ENCODE measurements at regions of chr10 and their contacts with region 1.

Region 1: DNA sequence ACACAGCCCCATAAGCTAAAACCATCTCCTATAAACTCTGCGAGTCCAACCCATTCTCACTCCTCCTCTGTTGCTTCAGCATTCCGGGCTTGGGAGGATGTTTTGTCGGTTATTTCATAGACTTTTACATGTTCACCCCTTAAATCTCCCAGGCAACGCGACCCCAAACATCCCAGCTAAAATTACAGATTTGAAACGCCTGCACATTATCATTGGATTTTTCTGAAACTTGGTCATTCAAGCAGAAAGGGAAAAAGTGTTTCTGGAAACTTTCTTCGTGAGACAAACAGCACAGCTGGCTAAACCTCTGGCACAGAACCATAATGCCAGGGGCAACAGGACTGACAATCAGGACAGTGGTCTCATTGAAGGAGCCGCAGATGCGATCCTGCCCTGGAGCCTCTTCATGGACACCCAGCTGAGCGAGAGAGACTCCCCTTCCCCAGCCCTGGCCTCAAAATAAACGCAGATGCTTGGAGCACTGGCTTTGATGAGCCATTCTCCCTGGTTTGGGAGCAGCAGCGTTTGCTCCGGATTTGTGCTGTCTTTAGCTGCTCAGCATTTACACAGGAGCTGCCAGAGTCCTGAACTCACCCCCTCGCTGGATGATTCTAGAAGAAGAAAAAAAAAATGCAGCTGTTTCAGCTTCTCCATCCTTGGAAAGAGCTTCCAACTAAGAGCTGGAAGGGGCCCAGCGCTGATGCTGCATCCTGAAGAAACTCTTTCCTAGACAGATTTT is 30.1 kb downstream of the AFAP1L2 start:
- DNase-seq: no peak
- H3K4me3 ChIP-seq: no peak overlapping the region
- H3K27ac ChIP-seq: no peak overlapping the region
- H3K4me1 ChIP-seq: peaks cover 0 to 4% (median 1%) of the 10 kb centered on the region in 4 experiments
- H3K27me3 ChIP-seq: no peaks in the 10 kb centered on the region

Region 2: GRCh38 chr10:114356751-114357514 is 17.3 kb before region 1 on chr10:
- CTCF ChIA-PET with region 1: no interaction called
- POLR2A ChIA-PET with region 1: no interaction called
- DNase-seq: no peak
- H3K4me3 ChIP-seq: no peak overlapping the region
- H3K27ac ChIP-seq: no peak overlapping the region
- H3K4me1 ChIP-seq: peaks cover 0 to 13% (median 5%) of the 10 kb centered on the region in 4 experiments
- H3K27me3 ChIP-seq: no peaks in the 10 kb centered on the region

Region 3: GRCh38 chr10:114388275-114388674 is 14.1 kb after region 1 on chr10:
- CTCF ChIA-PET with region 1: interaction called, 10 read pairs
- POLR2A ChIA-PET with region 1: no interaction called
- DNase-seq: peak in 2 of 3 donors; percentile 41 to 43
- H3K4me3 ChIP-seq: no peak overlapping the region
- H3K27ac ChIP-seq: no peak overlapping the region
- H3K4me1 ChIP-seq: peaks cover 4 to 16% (median 10%) of the 10 kb centered on the region in 4 experiments
- H3K27me3 ChIP-seq: peaks cover 0 to 1% (median 0%) of the 10 kb centered on the region in 5 experiments

Region 4: DNA sequence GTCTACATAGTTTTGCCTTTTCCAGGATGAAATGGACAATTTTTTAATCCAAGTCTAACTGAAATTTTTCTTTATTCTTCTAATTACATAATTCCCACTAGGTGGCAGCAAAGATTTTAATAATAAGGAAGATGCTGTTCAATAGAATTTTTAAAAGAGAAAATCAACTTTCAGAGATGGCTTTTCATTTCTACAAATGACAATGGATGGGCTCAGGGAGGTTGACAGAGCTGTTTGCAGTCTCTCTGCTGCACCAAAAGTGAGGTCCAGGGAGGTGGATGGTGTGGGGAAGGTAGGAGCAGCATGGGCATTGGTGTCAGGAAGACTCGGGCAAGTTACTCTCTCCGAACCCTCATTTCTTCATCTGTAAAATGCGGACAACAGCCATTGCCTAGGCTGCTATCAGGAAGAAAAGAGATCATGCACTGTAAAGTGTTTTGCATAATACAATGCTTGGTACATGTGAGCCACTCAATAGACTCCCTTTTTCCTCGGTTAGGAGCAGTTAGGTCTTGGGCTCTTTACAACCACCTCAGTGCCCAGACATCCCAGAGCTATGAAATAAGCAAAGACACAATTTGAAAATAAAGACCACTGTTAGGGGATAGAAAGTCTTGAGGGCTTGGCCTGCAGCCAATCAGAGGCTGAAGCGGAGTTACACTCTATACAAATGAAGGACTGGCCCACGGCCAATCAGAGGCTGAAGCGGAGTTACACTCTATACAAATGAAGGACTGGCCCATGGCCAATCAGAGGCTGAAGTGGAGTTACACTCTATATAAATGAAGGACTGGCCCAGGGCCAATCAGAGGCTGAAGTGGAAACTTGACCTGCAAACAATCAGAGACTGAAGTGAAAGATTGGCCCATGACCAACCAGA is 176.8 kb after region 1 on chr10:
- CTCF ChIA-PET with region 1: no interaction called
- POLR2A ChIA-PET with region 1: no interaction called
- DNase-seq: peak; percentile 31 to 55 (median 55)
- H3K4me3 ChIP-seq: no peak overlapping the region
- H3K27ac ChIP-seq: no peak overlapping the region
- H3K4me1 ChIP-seq: peaks cover 0 to 16% (median 4%) of the 10 kb centered on the region in 4 experiments
- H3K27me3 ChIP-seq: no peaks in the 10 kb centered on the region

Measured in common myeloid progenitor, CD34-positive (primary cell).